Activated T-helper 2 cell treated with anti-CD3 and anti-CD28 coated beads, Interferon-gamma antibody, Interleukin-2, Interleukin-4, amounts not matched to agents 10 μg/mL and 5 μg/mL and 100 μg/mL, durations not matched to agents 14 hours and 24 hours and 36 hours (primary cell): ENCODE measurements at regions of chr12 and their contacts with region 1.

Region 1: GRCh38 chr12:120012067-120012621 is 23.1 kb downstream of the BICDL1 start:
- DNase-seq: peak; percentile 76
- H3K4me3 Mint-ChIP-seq: peak overlapping the region; percentile 75
- H3K27ac Mint-ChIP-seq: peak overlapping the region; percentile 96
- H3K4me1 Mint-ChIP-seq: peaks cover 74% of the 10 kb centered on the region
- H3K27me3 Mint-ChIP-seq: no peaks in the 10 kb centered on the region

Region 2: DNA sequence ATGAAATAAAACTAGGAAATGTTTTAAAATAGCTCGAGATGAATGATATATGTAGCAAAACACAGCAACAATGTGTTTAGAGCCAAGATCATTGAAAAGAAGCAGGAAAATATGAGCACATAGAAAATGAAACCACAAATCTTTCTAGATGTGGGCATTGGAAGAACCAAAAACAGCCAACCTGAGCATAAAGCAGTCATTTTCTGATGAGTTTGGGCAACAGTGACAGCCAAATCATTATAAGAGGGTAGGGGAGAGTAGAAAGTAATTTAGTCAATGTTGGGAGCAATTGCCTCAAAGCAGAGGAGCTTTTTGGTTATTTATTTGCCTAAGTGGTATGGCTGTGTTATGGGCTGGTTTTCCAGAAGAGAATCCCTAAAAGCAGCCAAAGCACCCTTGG is 31.9 kb before region 1 on chr12:
- intact Hi-C with region 1: loop called (anchors 1 kb)
- DNase-seq: no peak
- H3K4me3 Mint-ChIP-seq: peak overlapping the region; percentile 2
- H3K27ac Mint-ChIP-seq: peak overlapping the region; percentile 80
- H3K4me1 Mint-ChIP-seq: peaks cover 8% of the 10 kb centered on the region
- H3K27me3 Mint-ChIP-seq: peaks cover 16% of the 10 kb centered on the region

Region 3: DNA sequence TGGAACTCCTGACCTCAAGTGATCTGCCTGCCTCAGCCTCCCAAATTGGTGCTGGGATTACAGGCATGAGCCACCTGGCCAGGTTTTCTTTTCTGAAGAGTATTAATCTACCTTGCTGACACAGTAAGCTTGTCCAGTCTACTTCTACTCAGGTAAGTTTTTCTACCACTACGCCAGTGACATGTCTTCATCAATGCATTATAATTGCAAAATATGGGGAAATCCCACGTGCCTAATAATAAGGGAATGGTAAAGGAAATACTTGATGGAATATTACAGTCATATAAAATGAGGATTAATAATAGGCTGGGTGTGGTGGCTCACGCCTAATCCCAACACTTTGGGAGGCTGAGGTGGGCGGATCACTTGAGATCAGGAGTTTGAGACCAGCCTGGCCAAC is 42.1 kb after region 1 on chr12:
- intact Hi-C with region 1: loop called (anchors 5 kb)
- DNase-seq: no peak
- H3K4me3 Mint-ChIP-seq: no peak overlapping the region
- H3K27ac Mint-ChIP-seq: no peak overlapping the region
- H3K4me1 Mint-ChIP-seq: peaks cover 14% of the 10 kb centered on the region
- H3K27me3 Mint-ChIP-seq: no peaks in the 10 kb centered on the region

Region 4: GRCh38 chr12:120116792-120117651 is 104.9 kb after region 1 on chr12:
- intact Hi-C with region 1: loop called (anchors 1 kb)
- DNase-seq: peak; percentile 97
- H3K4me3 Mint-ChIP-seq: peak overlapping the region; percentile 86
- H3K27ac Mint-ChIP-seq: peak overlapping the region; percentile 83
- H3K4me1 Mint-ChIP-seq: peaks cover 67% of the 10 kb centered on the region
- H3K27me3 Mint-ChIP-seq: no peaks in the 10 kb centered on the region

Region 5: GRCh38 chr12:120292661-120293531 is 280.8 kb after region 1 on chr12 and contains the start of gene RNU4-1:
- intact Hi-C with region 1: loop called (anchors 2 kb)
- DNase-seq: peak; percentile 76
- H3K4me3 Mint-ChIP-seq: no peak within 1 kb of the TSS
- H3K27ac Mint-ChIP-seq: no peak within 1 kb of the TSS
- H3K4me1 Mint-ChIP-seq: peaks cover 8% of the 10 kb centered on the region
- H3K27me3 Mint-ChIP-seq: peaks cover 9% of the 10 kb centered on the region
- total RNA-seq, gene RNU4-1: 2,603 and 2,662 TPM in 2 replicates